Natural killer cell (primary cell): ENCODE measurements at regions of chr5 and their contacts with region 1.

Region 1: DNA sequence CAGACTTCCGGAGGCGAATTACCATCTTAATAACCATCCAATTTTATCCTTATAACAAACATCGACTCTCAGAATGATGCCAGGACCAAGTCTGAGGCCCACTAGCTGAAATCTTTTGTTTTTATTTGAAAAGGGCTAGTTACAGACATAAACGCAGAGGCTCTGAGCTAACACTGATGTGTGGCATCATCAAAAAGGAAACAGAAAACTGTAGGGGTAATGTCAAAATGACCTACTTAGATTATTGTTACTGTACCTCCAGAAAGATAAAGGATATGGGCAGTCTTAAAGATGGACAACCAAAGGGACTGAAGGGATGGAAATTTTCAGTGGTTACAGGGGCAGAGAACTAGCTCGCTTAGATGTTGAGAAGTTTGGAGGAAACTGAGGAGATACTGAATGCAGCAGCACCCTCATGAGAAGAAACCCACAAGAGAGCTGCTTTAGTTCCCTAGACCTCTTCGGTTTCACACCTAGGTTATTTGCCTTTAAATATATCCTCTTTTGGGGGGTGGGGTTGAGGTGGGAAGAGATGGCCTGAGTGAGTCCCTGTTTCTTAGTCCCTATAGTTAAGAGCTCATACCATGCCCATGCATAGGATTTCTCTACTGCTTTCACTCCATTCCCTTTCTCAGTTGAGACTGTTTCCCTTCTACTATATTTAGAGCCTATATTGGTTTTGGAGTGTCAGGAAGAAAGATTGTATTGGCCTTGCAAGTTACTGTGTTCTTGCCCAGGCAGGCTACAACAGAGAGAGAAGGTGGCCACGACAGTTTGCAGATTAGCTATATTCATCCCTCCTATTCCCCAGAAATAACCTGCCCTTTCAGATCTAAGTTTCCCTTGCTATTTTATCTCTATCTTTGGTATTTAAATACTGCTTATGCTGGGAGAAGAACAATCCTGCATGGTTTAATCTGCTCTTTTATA is 320.4 kb upstream of the EFNA5 start:
- DNase-seq: peak in 1 of 2 donors; percentile 29
- ATAC-seq: peak; percentile 87 to 90 (median 88)
- H3K4me3 ChIP-seq: no peak overlapping the region
- H3K4me3 Mint-ChIP-seq: peak overlapping the region; percentile 73
- H3K27ac ChIP-seq: peak overlapping the region; percentile 80
- H3K27ac Mint-ChIP-seq: peak overlapping the region; percentile 94
- H3K4me1 ChIP-seq: peaks cover 11% of the 10 kb centered on the region
- H3K4me1 Mint-ChIP-seq: peaks cover 33 to 40% of the 10 kb centered on the region in 2 donors
- H3K27me3 ChIP-seq: no peaks in the 10 kb centered on the region
- H3K27me3 Mint-ChIP-seq: no peaks in the 10 kb centered on the region
- CTCF ChIP-seq: no peak

Region 2: DNA sequence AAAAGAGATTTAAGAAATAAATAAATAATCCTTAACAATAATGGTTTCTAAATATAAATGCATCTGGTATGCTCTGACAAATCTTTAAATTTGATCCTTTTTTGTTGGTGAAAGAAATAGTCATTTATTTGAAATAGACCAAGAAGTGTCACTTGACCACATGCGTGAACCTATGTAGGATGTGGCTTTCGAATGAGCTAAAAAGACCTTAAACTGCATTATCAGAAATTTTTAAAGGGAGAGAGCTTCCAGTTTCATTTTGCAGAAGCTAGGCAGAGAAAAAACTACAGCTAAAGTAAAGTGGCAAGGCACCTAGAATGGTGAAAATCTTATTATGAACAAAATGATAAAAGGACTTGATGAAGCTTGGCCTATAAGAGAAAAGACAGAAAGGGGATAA is 11.2 kb before region 1 on chr5:
- intact Hi-C with region 1: loop called (anchors 1 kb)
- DNase-seq: peak in 1 of 2 donors; percentile 35
- ATAC-seq: peak; percentile 78 to 87 (median 81)
- H3K4me3 ChIP-seq: no peak overlapping the region
- H3K4me3 Mint-ChIP-seq: peak overlapping the region; percentile 75
- H3K27ac ChIP-seq: peak overlapping the region; percentile 46
- H3K27ac Mint-ChIP-seq: peak overlapping the region; percentile 82 to 92
- H3K4me1 ChIP-seq: peaks cover 31% of the 10 kb centered on the region
- H3K4me1 Mint-ChIP-seq: peaks cover 66 to 68% of the 10 kb centered on the region in 2 donors
- H3K27me3 ChIP-seq: no peaks in the 10 kb centered on the region
- H3K27me3 Mint-ChIP-seq: no peaks in the 10 kb centered on the region
- CTCF ChIP-seq: no peak